Dendritic cell treated with granulocyte-macrophage colony-stimulating factor and Interleukin-4, amounts not matched to agents 40 ng/mL and 50 ng/mL, for 4 days (primary cell): ENCODE measurements at regions of chr7 and their contacts with region 1.

Region 1: DNA sequence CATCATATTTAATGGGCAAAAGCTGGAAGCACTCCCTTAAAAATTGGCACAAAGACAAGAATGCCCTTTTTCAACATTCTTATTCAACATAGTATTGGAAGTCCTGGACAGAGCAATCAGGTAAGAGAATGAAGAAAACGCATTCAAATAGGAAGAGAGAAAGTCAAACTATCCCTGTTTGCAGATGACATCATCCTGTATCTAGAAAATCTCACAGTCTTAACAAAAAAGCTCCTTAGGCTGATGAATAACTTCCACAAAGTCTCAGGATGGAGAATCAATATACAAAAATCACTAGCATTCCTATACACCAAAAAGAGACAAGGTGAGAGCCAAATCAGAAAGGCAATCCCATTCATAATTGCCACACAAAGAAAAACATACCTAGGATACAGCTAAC is 477.4 kb upstream of the STEAP1 start:
- H3K4me3 Mint-ChIP-seq: no peak overlapping the region
- H3K27ac Mint-ChIP-seq: no peak overlapping the region
- H3K4me1 Mint-ChIP-seq: no peaks in the 10 kb centered on the region
- H3K27me3 Mint-ChIP-seq: no peaks in the 10 kb centered on the region

Region 2: DNA sequence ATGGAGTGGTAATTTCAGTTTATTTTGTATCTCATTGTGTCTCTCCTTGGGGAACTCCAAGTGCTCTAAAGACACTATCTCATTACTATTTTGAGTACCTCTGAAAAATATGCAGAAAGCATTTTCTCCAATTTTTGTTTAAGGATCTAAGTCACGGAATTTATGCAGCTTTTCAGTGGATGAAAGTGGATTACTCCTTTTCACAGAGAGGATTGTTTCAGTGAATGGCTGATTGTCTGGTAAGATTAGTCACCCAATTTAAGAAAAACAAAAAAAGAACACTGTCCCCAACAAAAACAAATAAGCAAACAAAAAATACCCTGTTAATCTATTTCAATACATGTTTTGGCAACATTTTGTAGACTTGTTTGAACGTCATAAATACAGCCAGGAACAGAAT is 543.1 kb before region 1 on chr7:
- intact Hi-C with region 1: no loop called
- H3K4me3 Mint-ChIP-seq: no peak overlapping the region
- H3K27ac Mint-ChIP-seq: no peak overlapping the region
- H3K4me1 Mint-ChIP-seq: no peaks in the 10 kb centered on the region
- H3K27me3 Mint-ChIP-seq: no peaks in the 10 kb centered on the region

Region 3: GRCh38 chr7:89661889-89662288 is 15.0 kb before region 1 on chr7:
- intact Hi-C with region 1: loop called (anchors 1 kb)
- H3K4me3 Mint-ChIP-seq: no peak overlapping the region
- H3K27ac Mint-ChIP-seq: no peak overlapping the region
- H3K4me1 Mint-ChIP-seq: no peaks in the 10 kb centered on the region
- H3K27me3 Mint-ChIP-seq: no peaks in the 10 kb centered on the region

Region 4: GRCh38 chr7:89914711-89915110 is 237.8 kb after region 1 on chr7:
- intact Hi-C with region 1: no loop called
- H3K4me3 Mint-ChIP-seq: no peak overlapping the region
- H3K27ac Mint-ChIP-seq: no peak overlapping the region
- H3K4me1 Mint-ChIP-seq: no peaks in the 10 kb centered on the region
- H3K27me3 Mint-ChIP-seq: no peaks in the 10 kb centered on the region

Region 5: DNA sequence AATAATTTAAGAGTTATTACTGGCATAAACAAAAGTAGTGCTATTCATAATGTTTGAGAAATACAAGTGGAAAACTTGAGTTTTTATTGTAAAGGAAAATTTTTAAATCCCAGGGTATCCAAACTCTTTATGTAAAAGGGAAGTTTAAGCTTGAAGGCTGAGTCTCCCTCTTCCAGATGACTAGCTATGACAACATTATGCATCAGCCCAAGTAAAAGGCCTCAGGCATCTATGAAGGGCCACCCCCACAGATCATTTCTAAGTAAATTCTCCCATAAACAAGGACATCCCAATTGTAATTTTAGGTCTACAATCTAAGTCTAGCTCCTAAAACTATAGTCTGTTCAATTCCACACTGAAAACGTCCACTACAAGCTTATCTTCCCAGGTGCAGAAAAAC is 311.2 kb after region 1 on chr7:
- intact Hi-C with region 1: no loop called
- H3K4me3 Mint-ChIP-seq: no peak overlapping the region
- H3K27ac Mint-ChIP-seq: no peak overlapping the region
- H3K4me1 Mint-ChIP-seq: no peaks in the 10 kb centered on the region
- H3K27me3 Mint-ChIP-seq: no peaks in the 10 kb centered on the region

Region 6: DNA sequence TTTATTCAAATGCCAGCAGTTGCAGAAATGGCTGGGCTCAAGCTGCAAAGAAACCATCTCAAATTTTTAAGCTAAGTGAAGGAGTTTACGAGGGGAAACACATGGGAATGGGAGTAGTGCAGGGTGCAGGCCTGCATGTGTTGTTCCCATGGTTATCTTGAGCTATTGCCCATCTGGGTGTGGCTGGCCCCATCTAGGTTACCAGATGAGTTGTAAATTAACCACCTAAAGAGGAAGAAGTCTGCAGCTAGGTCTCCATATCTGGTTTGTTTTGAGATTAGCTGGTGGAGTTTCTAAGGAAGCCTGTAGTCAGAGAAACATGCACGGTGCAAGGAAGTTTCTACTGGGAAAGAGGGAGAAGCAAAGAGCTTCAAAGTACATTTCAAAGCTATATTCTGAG is 511.4 kb after region 1 on chr7:
- intact Hi-C with region 1: no loop called
- H3K4me3 Mint-ChIP-seq: no peak overlapping the region
- H3K27ac Mint-ChIP-seq: no peak overlapping the region
- H3K4me1 Mint-ChIP-seq: peaks cover 11% of the 10 kb centered on the region
- H3K27me3 Mint-ChIP-seq: no peaks in the 10 kb centered on the region